ENCODE measurements at regions of chr21 and their contacts with region 1.

Region 1: DNA sequence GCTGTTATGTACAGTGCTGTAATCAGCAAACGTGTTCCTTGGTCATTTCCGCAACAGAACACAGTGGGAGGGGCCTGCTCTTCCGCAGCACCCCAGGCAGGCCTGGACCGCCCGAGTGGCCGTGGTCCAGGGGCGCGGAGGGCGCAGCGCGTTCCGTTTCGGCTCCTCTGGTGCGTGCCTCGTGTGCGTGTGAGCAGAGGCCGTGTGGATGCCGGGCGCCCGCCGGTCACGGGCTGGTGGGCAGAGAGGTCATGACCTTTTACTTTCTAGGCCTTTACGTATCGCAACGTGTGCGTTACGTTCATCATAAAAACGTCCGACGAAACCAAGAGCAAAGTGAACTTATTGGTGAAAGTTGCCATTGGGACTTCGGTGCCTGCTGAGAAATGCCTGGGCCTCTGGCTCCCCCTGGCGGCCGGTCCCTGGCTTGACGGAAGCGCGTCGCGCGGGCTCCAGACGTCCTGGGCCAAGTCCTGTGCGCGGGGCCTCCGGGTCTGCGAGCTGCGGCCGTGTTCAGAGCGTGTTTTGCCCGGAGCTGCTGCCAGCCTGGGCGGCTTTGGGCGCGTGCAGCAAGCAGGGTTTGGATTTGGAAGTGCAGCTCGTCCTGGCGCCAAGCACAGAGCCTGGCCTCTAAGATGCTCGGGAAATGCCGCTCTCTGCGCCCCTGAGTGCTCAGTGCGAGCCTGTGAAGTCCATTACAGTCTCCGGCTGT is 34.4 kb downstream of the COL18A1 start:
- DNase-seq: peak; percentile 88
- ATAC-seq: peak; percentile 86 to 87

Region 2: GRCh38 chr21:45388011-45388521 is 51.3 kb before region 1 on chr21:
- intact Hi-C with region 1: loop called in 1 of 2 experiments (anchors 2 kb)
- DNase-seq: peak; percentile 29
- ATAC-seq: peak; percentile 34 to 38

Measured in left cardiac atrium (tissue), 4 donors.